Sciatic nerve (tissue), 2 donors: ENCODE measurements at regions of chr2 and their contacts with region 1.

Region 1: DNA sequence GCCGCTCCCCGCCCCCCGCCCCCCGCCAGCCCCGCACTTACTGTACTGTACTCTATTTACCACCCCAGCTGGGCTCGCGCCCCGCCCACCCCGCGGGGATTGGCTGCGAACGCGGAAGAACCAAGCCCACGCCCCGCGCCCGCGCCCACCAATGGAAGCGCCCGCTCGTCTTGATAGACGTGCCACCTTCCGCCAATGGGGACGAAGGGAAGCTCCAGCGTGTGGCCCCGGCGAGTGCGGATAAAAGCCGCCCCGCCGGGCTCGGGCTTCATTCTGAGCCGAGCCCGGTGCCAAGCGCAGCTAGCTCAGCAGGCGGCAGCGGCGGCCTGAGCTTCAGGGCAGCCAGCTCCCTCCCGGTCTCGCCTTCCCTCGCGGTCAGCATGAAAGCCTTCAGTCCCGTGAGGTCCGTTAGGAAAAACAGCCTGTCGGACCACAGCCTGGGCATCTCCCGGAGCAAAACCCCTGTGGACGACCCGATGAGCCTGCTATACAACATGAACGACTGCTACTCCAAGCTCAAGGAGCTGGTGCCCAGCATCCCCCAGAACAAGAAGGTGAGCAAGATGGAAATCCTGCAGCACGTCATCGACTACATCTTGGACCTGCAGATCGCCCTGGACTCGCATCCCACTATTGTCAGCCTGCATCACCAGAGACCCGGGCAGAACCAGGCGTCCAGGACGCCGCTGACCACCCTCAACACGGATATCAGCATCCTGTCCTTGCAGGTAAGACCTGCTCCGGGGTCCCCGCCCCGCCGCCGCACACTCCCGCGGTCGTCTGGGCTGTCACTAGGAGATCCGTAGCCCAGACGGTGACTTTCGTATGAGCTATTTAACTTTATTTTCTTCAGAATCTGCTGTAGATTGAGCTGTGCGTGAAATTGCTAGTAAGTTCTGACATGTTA is at the start of gene ID2:
- DNase-seq: peak; percentile 100
- ATAC-seq: peak; percentile 90
- total RNA-seq, gene ID2: 95.8 TPM

Region 2: DNA sequence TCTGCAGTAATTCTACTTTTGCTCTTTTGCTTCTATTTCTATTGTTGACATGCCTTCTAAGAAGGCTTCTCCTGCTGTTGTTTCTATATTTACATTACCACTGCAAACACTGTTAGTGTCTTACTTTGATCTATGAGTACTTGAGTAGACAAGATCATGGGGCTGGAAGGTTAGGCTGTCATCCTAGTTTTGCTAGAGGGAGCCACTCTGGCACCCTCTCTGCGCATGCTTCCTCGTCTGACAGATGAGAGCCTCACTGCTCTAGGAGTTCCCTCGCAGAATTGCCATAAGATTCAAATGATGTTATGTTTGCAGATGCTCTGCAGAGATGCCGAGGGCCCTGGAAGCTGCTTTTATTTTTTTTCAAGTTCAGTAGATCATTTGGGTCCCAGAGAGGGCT is 1579.2 kb before region 1 on chr2:
- intact Hi-C with region 1: loop called (anchors 10 kb)
- DNase-seq: no peak
- ATAC-seq: no peak

Region 3: DNA sequence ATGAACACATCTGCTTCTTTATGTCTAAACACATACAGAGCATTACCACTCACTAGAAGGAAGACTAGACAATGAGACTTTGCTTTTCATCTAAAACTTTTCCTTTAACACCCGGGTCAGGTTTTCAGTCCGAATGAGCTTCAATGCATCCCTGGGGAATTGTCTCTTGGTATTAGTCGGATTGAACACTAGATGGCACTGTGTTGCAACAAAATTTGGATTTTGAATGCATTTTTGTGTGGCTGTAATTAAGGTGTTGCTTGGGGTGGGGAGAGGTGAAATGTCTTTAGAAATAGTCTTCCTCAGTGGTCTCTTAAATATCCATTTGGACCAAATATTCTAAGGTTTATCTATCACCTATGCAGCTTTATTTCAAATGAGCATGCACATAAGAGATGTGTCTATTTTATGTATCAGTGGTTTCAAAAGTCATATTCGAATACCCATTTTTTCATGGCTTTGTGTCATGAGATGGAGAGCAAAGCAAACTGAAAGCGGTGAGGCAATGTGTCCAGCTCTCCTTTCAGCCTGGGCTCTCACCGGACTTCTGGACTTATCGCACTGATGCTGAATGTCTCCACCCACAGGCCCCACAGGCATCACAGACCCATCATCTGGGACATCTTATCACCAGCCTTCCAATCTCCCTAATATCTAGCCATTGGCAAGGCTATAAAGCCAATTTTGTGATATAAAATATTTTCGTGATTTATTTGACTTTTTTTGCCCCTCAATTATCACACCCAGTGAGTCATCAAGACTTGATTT is 1254.6 kb before region 1 on chr2:
- intact Hi-C with region 1: loop called (anchors 5 kb)
- DNase-seq: no peak
- ATAC-seq: peak; percentile 43

Region 4: GRCh38 chr2:8628230-8629209 is 53.5 kb before region 1 on chr2:
- intact Hi-C with region 1: loop called (anchors 10 kb)
- DNase-seq: peak; percentile 50
- ATAC-seq: no peak